Ascending aorta (tissue), 2 donors: ENCODE measurements at regions of chr10 and their contacts with region 1.

Region 1: GRCh38 chr10:3172446-3173170 is at the start of gene PITRM1:
- DNase-seq: peak; percentile 98 to 99
- H3K4me3 ChIP-seq: peak within 1 kb of the TSS; percentile 67 to 72
- H3K27ac ChIP-seq: peak within 1 kb of the TSS; percentile 82 to 86
- H3K4me1 ChIP-seq: peaks cover 4 to 15% of the 10 kb centered on the region in 2 donors
- H3K27me3 ChIP-seq: no peaks in the 10 kb centered on the region
- CTCF ChIP-seq: no peak
- total RNA-seq, gene PITRM1: 110 TPM

Region 2: GRCh38 chr10:3107426-3107961 is 65.1 kb before region 1 on chr10:
- intact Hi-C with region 1: no loop called
- DNase-seq: peak; percentile 84 to 98
- H3K4me3 ChIP-seq: peak overlapping the region in 1 of 2 donors; percentile 26
- H3K27ac ChIP-seq: peak overlapping the region; percentile 88 to 95
- H3K4me1 ChIP-seq: peaks cover 12 to 38% of the 10 kb centered on the region in 2 donors
- H3K27me3 ChIP-seq: no peaks in the 10 kb centered on the region
- CTCF ChIP-seq: no peak

Region 3: DNA sequence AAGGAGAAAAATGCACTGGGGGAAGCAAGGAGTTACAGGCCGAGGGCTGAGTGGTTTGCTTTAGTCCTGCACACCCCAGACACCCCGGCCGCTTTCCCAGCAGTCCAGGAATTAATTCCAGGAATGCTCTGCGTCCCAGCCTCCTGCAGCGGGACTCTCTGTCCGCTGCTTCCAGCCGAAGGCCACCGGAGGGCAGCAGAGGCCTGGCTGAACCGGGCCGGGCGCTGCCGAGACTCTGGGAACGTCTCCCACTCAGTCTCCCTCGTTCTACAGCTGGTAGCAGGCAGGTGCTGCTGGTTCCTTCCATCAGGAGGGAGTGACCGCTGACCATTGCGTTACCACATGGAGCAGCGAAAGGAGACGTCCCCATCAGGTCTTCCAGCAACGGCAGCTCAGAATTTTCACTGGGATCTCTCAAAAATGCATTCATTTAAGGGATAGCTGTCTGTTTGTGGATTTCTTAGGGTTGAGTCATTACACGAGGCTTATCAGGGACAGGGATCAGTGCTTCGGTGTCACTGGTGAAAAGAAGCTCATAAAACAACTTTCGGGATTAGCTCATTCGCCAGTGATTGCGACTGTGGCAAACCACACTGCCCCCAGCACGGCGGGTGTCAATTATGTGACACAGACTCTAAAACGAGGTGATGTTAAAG is 24.9 kb after region 1 on chr10:
- intact Hi-C with region 1: no loop called
- DNase-seq: peak; percentile 26 to 90
- H3K4me3 ChIP-seq: peak overlapping the region in 1 of 2 donors; percentile 54
- H3K27ac ChIP-seq: no peak overlapping the region
- H3K4me1 ChIP-seq: peaks cover 3 to 4% of the 10 kb centered on the region in 2 donors
- H3K27me3 ChIP-seq: no peaks in the 10 kb centered on the region
- CTCF ChIP-seq: peak; percentile 95 to 96 (median 96)

Region 4: GRCh38 chr10:4947635-4948596 is 1775.3 kb after region 1 on chr10:
- intact Hi-C with region 1: loop called (anchors 5 kb)
- DNase-seq: peak in 1 of 2 donors; percentile 87
- H3K4me3 ChIP-seq: no peak overlapping the region
- H3K27ac ChIP-seq: peak overlapping the region; percentile 80 to 94
- H3K4me1 ChIP-seq: peaks cover 15 to 41% of the 10 kb centered on the region in 2 donors
- H3K27me3 ChIP-seq: no peaks in the 10 kb centered on the region
- CTCF ChIP-seq: no peak